Thyroid gland (tissue), 4 donors: ENCODE measurements at regions of chr6 and their contacts with region 1.

Region 1: GRCh38 chr6:24581084-24581669 is 64.8 kb downstream of the KIAA0319 start:
- DNase-seq: peak; percentile 71 to 77
- H3K4me3 ChIP-seq: no peak overlapping the region
- H3K27ac ChIP-seq: no peak overlapping the region
- H3K4me1 ChIP-seq: peaks cover 4 to 17% of the 10 kb centered on the region in 2 donors
- H3K27me3 ChIP-seq: no peaks in the 10 kb centered on the region
- CTCF ChIP-seq: peak; percentile 33 to 76 (median 62)
- POLR2A ChIP-seq: no peak

Region 2: GRCh38 chr6:24630856-24631505 is 49.8 kb after region 1 on chr6:
- intact Hi-C with region 1: no loop called
- DNase-seq: no peak
- H3K4me3 ChIP-seq: no peak overlapping the region
- H3K27ac ChIP-seq: no peak overlapping the region
- H3K4me1 ChIP-seq: no peaks in the 10 kb centered on the region
- H3K27me3 ChIP-seq: no peaks in the 10 kb centered on the region
- CTCF ChIP-seq: no peak
- POLR2A ChIP-seq: no peak

Region 3: DNA sequence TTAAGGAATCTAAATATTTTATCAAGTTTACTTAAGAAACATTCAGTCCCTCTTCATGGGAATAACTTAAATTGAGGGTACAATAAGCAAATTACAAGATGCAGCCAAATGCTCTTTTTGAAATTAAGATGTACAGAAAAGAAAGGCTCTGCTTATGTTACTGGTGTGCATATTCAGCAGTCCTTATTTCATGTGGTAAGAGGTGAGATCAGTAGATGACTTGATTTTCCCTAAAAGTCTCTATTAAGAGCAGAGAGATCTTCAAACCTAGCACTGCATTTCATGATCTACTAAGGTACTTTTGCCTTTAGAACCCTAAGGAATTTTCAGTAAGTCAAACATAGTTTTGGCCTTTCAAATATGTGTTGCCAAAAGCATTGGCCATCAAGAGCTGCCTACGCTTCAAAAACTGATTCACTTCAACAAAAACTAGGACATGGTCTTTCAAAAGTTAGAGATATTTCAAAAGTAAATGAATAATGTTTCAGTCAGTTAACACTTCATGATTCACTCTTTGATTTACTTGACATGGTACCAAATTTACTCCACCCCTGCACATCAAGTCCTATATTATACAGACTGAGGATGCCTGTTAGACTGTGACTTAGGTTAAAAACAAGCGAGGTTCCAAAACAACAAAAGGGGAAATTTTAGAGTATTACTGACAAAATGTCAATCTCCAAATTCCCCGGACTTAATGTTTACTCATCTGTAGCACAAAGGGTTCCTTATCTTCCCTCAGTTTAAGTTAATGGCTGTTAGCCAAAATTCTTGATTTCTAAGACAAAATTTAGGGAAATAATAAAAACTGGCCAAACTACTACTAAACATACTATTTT is 118.6 kb after region 1 on chr6:
- intact Hi-C with region 1: loop called (anchors 5 kb)
- DNase-seq: no peak
- H3K4me3 ChIP-seq: no peak overlapping the region
- H3K27ac ChIP-seq: peak overlapping the region in 1 of 3 donors; percentile 28
- H3K4me1 ChIP-seq: peaks cover 0 to 15% of the 10 kb centered on the region in 2 donors
- H3K27me3 ChIP-seq: no peaks in the 10 kb centered on the region
- CTCF ChIP-seq: no peak
- POLR2A ChIP-seq: no peak

Region 4: DNA sequence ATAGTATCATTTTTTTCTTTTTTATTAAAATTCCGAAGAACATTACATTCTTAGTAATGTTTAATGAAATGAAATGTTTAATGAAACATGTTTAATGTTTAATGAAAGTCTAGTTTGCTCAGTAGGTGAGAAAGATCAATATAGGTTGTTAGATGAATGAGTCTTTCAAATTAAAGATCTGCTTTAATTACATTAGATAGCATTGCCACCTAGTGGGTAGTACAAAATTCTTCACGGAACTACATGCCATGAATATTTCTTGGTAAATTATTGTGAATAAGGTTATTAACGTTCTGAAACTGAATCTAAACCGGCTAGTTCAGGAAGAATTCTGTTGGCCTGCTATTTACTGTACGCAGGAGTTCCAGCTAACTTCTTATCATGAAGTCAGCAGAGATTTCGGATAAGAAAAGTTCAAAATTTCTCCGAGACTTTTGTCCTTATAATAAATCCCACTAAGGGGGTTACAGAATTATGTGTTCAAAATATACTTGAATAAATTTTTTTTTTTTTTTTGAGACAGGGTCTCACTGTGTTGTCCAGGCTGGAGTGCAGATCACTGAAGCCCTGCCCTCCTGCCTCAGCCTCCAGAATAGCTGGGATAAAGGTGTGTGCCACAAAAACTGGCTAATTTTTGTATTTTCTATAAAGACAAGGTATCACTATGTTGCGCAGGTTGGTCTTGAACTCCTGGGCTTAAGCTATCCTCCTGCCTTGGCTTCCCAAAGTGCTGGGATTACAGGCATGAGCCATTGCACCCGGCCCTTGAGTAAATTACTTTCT is 185.7 kb after region 1 on chr6:
- intact Hi-C with region 1: loop called (anchors 5 kb)
- DNase-seq: no peak
- H3K4me3 ChIP-seq: no peak overlapping the region
- H3K27ac ChIP-seq: no peak overlapping the region
- H3K4me1 ChIP-seq: peaks cover 3 to 8% of the 10 kb centered on the region in 2 donors
- H3K27me3 ChIP-seq: no peaks in the 10 kb centered on the region
- CTCF ChIP-seq: peak in 4 of 6 experiments; percentile 25 to 56 (median 55)
- POLR2A ChIP-seq: no peak

Region 5: DNA sequence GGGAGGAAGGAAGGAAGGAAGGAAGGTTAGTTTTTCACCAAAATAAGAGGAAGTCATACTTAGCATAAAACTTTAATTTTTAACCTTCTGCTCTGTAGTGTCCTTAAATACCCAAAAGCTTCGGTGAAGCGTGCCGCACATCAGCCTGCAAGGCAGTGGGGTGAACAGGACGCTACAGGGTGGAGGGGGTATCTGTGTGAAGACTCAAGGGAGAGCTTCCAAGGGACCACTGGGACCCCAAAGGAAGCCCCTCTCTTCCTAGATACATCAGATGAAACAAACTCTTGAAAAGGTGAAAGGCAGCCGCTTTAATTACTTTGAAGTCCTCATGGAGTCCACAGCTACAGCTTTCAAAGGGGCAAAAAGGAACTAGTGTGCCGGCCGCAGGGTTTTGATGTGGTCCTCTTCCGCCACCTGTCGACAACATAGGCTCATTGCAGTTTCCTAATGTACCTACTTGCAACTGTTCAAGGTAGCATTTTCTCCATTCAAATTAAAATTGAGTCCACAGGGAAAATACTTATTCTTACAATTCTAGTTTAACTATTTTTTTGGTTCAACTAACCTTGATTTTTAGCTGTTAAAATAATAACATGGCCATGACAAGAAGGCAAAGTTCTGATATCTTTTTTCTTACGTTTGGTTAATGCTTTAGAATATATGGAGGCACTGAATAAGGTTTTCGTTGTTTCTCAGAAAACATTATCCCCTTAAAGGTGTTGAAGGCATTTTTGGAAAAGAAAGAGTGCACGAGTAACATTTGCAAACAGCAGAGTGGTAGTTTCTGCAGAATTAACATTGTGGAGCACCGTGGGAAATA is 489.6 kb after region 1 on chr6:
- intact Hi-C with region 1: loop called (anchors 5 kb)
- DNase-seq: peak; percentile 85 to 86
- H3K4me3 ChIP-seq: no peak overlapping the region
- H3K27ac ChIP-seq: no peak overlapping the region
- H3K4me1 ChIP-seq: no peaks in the 10 kb centered on the region
- H3K27me3 ChIP-seq: no peaks in the 10 kb centered on the region
- CTCF ChIP-seq: peak; percentile 82 to 92 (median 91)
- POLR2A ChIP-seq: no peak